PC-9 (cell line): ENCODE measurements at regions of chr5 and their contacts with region 1.

Region 1: DNA sequence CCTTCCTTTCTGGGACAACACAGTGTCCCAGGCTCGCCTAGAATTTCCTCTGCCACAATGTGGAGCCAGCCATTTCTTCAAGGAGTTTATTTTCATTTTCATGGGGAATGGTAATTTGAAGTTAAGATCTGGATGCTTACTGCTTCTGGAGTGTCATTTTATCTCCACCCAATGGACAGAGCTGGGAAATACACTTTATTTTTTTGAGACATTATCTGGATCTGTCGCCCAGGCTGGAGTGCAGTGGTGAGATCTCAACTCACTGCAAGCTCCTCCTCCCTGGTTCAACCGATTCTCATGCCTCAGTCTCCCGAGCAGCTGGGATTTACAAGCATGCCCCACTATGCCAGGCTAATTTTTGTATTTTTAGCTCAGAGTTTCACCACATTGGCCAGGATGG is 12.7 kb upstream of the THG1L start:
- DNase-seq: peak in 1 of 2 experiments; percentile 11
- H3K4me3 ChIP-seq: no peak overlapping the region
- H3K27ac ChIP-seq: no peak overlapping the region
- H3K4me1 ChIP-seq: peaks cover 6% of the 10 kb centered on the region; the same call in 1 of the 2 replicates
- H3K27me3 ChIP-seq: no peaks in the 10 kb centered on the region
- CTCF ChIP-seq: peak; percentile 75

Region 2: GRCh38 chr5:157328277-157328912 is 390.1 kb before region 1 on chr5:
- CTCF ChIA-PET with region 1: interaction called, 5 read pairs
- POLR2A ChIA-PET with region 1: no interaction called
- intact Hi-C with region 1: loop called (anchors 1 kb)
- DNase-seq: peak; percentile 50 to 61
- H3K4me3 ChIP-seq: peak overlapping the region; percentile 46; the same call in 1 of the 2 replicates
- H3K27ac ChIP-seq: no peak overlapping the region
- H3K4me1 ChIP-seq: 0 out of 2 replicates have a peak, but pooled peaks cover 4% of the 10 kb centered on the region
- H3K27me3 ChIP-seq: 0 out of 2 replicates have a peak, but pooled peaks cover 5% of the 10 kb centered on the region
- CTCF ChIP-seq: peak; percentile 91

Region 3: GRCh38 chr5:157390551-157391297 is 327.8 kb before region 1 on chr5:
- CTCF ChIA-PET with region 1: interaction called, 11 read pairs
- POLR2A ChIA-PET with region 1: no interaction called
- intact Hi-C with region 1: no loop called
- DNase-seq: peak; percentile 93 to 100
- H3K4me3 ChIP-seq: no peak overlapping the region
- H3K27ac ChIP-seq: peak overlapping the region; percentile 79
- H3K4me1 ChIP-seq: peaks cover 44% of the 10 kb centered on the region
- H3K27me3 ChIP-seq: no peaks in the 10 kb centered on the region
- CTCF ChIP-seq: no peak

Region 4: GRCh38 chr5:157476702-157477408 is 241.7 kb before region 1 on chr5:
- CTCF ChIA-PET with region 1: interaction called, 5 read pairs
- POLR2A ChIA-PET with region 1: no interaction called
- intact Hi-C with region 1: loop called (anchors 1 kb)
- DNase-seq: peak; percentile 47 to 50
- H3K4me3 ChIP-seq: no peak overlapping the region
- H3K27ac ChIP-seq: no peak overlapping the region
- H3K4me1 ChIP-seq: peaks cover 26% of the 10 kb centered on the region
- H3K27me3 ChIP-seq: no peaks in the 10 kb centered on the region
- CTCF ChIP-seq: peak; percentile 89

Region 5: DNA sequence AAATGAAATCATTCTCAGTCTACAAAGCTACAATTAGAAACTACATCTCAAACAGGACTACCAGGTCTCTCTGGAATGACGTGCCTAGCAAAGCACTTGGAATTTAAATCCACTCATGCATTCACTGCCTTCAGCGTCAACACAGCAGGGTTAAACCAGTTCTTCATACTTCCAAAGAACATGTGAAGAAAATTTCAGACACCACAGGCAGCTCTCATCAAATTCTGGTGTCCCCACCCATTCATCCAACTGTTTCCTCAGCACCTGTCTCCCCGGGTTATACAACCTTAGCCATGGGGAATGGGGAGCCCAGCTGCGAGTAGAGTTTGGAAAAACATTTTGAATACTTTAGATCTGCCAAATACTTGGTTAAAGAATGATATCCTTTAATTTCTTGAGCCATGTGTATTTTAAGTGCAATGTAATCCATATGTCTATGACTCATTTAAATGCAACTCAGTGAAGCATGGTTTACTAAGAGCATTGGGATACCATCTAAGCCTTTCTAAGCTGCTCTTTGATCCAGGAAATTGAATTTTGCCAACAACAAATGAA is 160.4 kb before region 1 on chr5:
- CTCF ChIA-PET with region 1: interaction called, 14 read pairs
- POLR2A ChIA-PET with region 1: no interaction called
- intact Hi-C with region 1: loop called (anchors 5 kb)
- DNase-seq: peak; percentile 60 to 96
- H3K4me3 ChIP-seq: 0 out of 2 replicates have a peak overlapping the region, but pooled peaks have one; percentile 2
- H3K27ac ChIP-seq: peak overlapping the region; percentile 85
- H3K4me1 ChIP-seq: peaks cover 69% of the 10 kb centered on the region
- H3K27me3 ChIP-seq: no peaks in the 10 kb centered on the region
- CTCF ChIP-seq: no peak

Region 6: DNA sequence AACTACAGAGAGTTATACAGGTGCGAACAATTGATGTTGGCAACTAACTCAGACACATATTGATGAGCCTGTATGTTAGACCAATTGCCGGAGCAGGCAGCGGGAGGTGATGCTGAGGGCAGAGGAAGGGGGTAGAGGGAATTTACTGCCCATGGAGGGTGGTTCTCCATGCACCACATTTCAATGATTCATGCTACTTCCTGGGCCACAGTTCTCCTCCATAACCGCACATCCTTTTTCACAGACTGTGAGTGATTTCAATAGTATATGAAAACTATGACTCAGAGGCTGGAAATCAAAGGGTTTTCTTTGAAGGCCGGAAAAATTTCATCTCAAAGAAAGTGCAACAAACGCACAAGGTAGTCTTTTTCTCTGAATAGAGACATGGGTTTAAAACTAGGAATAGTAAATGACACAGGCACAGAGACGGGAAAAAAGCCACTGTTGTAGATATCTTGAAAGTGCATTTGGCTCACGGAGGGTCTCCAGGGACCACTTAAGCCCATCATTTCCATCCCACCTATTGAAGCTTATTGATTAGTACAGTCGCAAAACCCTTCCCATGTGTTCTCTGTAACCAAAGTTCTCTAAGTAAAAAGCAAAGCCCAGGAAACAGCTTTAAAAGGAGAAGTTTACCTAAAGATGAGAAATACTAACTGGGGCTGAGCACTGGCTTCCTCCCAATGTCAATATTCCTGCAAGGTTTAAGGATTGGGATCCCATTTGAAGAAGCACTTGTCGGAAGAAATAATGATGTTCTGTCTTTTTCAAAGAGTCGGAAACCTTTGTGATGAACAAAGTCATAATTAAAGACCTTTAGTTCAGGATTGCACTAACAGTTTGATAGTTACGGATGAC is 115.0 kb before region 1 on chr5:
- CTCF ChIA-PET with region 1: no interaction called
- POLR2A ChIA-PET with region 1: no interaction called
- intact Hi-C with region 1: loop called (anchors 10 kb)
- DNase-seq: peak; percentile 29 to 89
- H3K4me3 ChIP-seq: 0 out of 2 replicates have a peak overlapping the region, but pooled peaks have one; percentile 6
- H3K27ac ChIP-seq: peak overlapping the region; percentile 97
- H3K4me1 ChIP-seq: peaks cover 68% of the 10 kb centered on the region
- H3K27me3 ChIP-seq: no peaks in the 10 kb centered on the region
- CTCF ChIP-seq: no peak

Region 7: GRCh38 chr5:157670662-157671591 is 47.6 kb before region 1 on chr5 and contains the start of gene C5orf52:
- CTCF ChIA-PET with region 1: no interaction called
- POLR2A ChIA-PET with region 1: no interaction called
- intact Hi-C with region 1: loop called (anchors 1 kb)
- DNase-seq: no peak
- H3K4me3 ChIP-seq: no peak within 1 kb of the TSS
- H3K27ac ChIP-seq: no peak within 1 kb of the TSS
- H3K4me1 ChIP-seq: peaks cover 3% of the 10 kb centered on the region
- H3K27me3 ChIP-seq: no peaks in the 10 kb centered on the region
- CTCF ChIP-seq: no peak
- total RNA-seq, gene C5orf52: not detected in 2 replicates